HEK293T (cell line): ENCODE measurements at regions of chr11 and their contacts with region 1.

Region 1: GRCh38 chr11:124633355-124633754 is 10.7 kb downstream of the TBRG1 start:
- DNase-seq: peak; percentile 26

Region 2: DNA sequence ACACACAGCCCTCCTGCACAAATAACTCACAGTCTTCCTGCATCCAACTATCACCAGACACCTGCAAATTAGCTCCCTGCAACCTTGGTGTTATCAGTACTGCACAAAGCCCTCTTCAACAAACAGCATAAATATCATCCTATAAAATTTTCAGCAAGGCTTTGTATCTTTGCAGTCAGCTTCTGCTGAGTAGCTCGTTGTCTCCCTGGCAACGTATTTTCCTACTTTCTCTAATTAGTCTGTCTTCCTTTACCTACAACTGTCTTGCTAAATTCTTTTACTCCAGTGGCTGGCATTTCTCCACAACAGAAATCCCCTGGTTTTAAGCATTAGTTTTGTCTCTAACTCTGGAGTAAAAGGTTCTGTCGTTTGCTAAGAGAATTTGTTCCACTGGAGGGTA is 727.5 kb before region 1 on chr11:
- CTCF ChIA-PET with region 1: no interaction called
- POLR2A ChIA-PET with region 1: no interaction called
- DNase-seq: no peak

Region 3: DNA sequence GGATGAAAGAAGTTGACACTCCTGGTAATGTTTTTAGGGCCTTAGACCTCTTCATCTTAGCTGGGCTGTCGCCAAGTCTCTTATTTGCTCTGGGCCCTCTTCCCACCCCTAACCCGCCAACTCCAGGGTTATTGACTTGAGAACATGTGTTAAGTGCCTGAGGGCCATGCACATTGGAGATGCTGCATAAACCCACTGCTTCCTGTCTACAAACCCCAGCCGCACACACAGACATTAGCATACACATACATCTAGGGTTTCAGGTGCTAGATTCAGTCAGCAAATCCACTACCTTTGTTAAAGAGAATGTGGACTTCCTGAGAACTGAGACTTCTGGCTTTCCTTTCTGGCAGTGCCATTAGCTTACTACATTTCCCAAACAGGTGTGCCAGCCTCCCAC is 21.3 kb before region 1 on chr11:
- CTCF ChIA-PET with region 1: no interaction called
- POLR2A ChIA-PET with region 1: no interaction called
- DNase-seq: no peak

Region 4: DNA sequence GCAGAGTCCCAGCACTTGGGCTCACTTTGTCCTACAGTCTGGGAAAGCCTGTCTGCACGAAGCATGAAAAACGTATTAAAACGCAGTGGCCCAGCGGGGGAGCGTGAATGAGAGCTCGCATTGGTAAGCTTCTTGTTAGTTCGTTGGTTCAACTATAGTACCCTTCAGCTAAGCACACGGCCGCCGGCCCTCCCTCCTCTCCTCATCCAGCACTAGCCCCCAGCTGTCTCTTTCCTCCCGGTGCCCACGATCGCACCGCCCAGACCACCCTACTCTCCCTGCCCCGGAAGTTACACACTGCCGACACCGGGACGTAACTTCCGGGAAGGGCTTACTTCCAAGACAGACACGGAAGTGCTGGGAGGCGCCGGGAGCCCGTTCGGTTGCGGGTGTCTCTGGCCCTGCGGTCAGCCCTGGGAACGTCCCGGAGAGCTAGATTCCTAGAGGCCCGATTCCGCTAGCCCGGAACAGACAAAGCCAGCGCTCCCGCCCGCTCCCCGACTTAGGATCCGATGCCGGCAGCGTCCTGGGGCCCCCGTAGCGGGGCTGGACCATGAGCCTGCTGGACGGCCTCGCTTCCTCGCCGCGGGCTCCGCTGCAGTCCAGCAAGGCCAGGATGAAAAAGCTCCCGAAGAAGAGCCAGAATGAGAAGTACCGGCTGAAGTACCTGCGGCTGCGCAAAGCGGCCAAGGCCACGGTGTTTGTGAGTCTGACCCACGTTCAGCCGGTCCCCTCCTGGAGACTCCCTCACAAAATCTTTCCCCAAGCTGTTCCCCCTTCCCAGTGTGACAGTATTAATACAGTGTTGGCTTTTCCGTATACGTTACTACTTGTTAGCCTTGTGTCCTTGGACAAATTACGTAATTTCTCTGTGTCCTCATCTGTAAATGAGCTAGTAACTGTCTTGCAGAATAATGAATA is 10.6 kb before region 1 on chr11 and contains the start of gene TBRG1:
- CTCF ChIA-PET with region 1: no interaction called
- POLR2A ChIA-PET with region 1: interaction called, 11 read pairs
- DNase-seq: peak; percentile 92